Heart left ventricle (tissue), 16 donors: ENCODE measurements at regions of chr14 and their contacts with region 1.

Region 1: GRCh38 chr14:95561001-95561412 is 26.2 kb downstream of the GLRX5 start:
- DNase-seq: peak; percentile 73 to 85 (median 76)
- ATAC-seq: peak; percentile 71 to 90 (median 88)
- H3K4me3 ChIP-seq: no peak overlapping the region
- H3K27ac ChIP-seq: no peak overlapping the region
- H3K4me1 ChIP-seq: no peaks in the 10 kb centered on the region
- H3K27me3 ChIP-seq: peaks cover 0 to 4% (median 0%) of the 10 kb centered on the region in 9 donors
- CTCF ChIP-seq: peak; percentile 89 to 98 (median 94)
- POLR2A ChIP-seq: no peak

Region 2: DNA sequence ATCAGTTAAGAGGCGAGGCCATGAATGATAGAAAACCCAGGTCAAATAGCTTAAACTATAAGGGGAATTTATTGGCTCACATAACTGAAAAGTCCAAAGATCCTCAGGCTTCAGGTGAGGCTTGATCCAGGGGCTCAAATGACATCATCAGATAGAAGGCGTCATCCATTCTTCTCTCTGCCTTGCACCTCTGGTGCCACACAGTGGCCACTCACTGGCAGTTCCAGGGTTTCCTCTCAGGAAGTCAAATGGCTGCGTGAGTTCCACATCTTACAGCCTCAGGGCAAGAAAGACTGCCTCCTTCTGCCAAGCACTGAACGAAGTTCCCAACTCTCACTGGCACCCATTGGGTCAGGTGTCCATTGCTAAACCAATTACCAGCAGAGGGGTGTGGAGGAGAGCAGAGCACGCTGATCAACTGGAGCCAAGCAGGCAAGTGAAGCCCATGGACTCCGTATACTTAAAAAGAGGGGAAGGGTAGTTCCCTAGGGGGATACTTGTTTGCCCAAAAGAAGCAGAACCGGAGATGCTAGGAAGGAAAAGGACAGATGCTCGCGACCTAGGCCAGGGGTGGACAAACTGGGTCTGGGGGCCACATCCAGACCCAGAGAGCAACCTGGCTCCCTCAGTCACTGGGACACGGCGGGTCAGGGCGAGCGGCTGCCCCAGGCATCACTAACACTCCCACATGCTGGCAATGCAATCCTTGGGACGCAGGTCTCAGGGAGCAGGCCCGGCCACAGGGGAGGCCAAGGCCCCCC is 879.5 kb before region 1 on chr14:
- intact Hi-C with region 1: no loop called
- DNase-seq: no peak
- ATAC-seq: no peak
- H3K4me3 ChIP-seq: no peak overlapping the region
- H3K27ac ChIP-seq: no peak overlapping the region
- H3K4me1 ChIP-seq: no peaks in the 10 kb centered on the region
- H3K27me3 ChIP-seq: peaks cover 0 to 41% (median 2%) of the 10 kb centered on the region in 9 donors
- CTCF ChIP-seq: peak in 8 of 12 donors; percentile 10 to 34 (median 23)
- POLR2A ChIP-seq: no peak

Region 3: GRCh38 chr14:95408731-95409476 is 152.1 kb before region 1 on chr14:
- intact Hi-C with region 1: no loop called
- DNase-seq: peak in 3 of 5 donors; percentile 34 to 43 (median 38)
- ATAC-seq: peak; percentile 16 to 60 (median 31)
- H3K4me3 ChIP-seq: no peak overlapping the region
- H3K27ac ChIP-seq: peak overlapping the region in 11 of 12 donors; percentile 56 to 86 (median 78)
- H3K4me1 ChIP-seq: peaks cover 9 to 33% (median 18%) of the 10 kb centered on the region in 12 donors
- H3K27me3 ChIP-seq: no peaks in the 10 kb centered on the region
- CTCF ChIP-seq: no peak
- POLR2A ChIP-seq: no peak

Region 4: GRCh38 chr14:95683793-95684192 is 122.8 kb after region 1 on chr14:
- intact Hi-C with region 1: loop called in 1 of 10 experiments (anchors 10 kb)
- DNase-seq: no peak
- ATAC-seq: peak in 1 of 4 donors; percentile 24
- H3K4me3 ChIP-seq: no peak overlapping the region
- H3K27ac ChIP-seq: no peak overlapping the region
- H3K4me1 ChIP-seq: no peaks in the 10 kb centered on the region
- H3K27me3 ChIP-seq: peaks cover 0 to 42% (median 0%) of the 10 kb centered on the region in 9 donors
- CTCF ChIP-seq: peak in 8 of 12 donors; percentile 8 to 50 (median 22)
- POLR2A ChIP-seq: no peak

Region 5: GRCh38 chr14:95765051-95765450 is 204.0 kb after region 1 on chr14:
- intact Hi-C with region 1: loop called in 5 of 10 experiments (anchors 5 kb)
- DNase-seq: no peak
- ATAC-seq: no peak
- H3K4me3 ChIP-seq: no peak overlapping the region
- H3K27ac ChIP-seq: no peak overlapping the region
- H3K4me1 ChIP-seq: no peaks in the 10 kb centered on the region
- H3K27me3 ChIP-seq: peaks cover 0 to 22% (median 4%) of the 10 kb centered on the region in 9 donors
- CTCF ChIP-seq: no peak
- POLR2A ChIP-seq: no peak

Region 6: GRCh38 chr14:95774265-95775160 is 213.5 kb after region 1 on chr14:
- intact Hi-C with region 1: loop called in 9 of 10 experiments (anchors 1 to 5 kb)
- DNase-seq: peak in 1 of 5 donors; percentile 14
- ATAC-seq: no peak
- H3K4me3 ChIP-seq: no peak overlapping the region
- H3K27ac ChIP-seq: no peak overlapping the region
- H3K4me1 ChIP-seq: no peaks in the 10 kb centered on the region
- H3K27me3 ChIP-seq: peaks cover 0 to 10% (median 0%) of the 10 kb centered on the region in 9 donors
- CTCF ChIP-seq: peak; percentile 66 to 88 (median 80)
- POLR2A ChIP-seq: no peak

Region 7: DNA sequence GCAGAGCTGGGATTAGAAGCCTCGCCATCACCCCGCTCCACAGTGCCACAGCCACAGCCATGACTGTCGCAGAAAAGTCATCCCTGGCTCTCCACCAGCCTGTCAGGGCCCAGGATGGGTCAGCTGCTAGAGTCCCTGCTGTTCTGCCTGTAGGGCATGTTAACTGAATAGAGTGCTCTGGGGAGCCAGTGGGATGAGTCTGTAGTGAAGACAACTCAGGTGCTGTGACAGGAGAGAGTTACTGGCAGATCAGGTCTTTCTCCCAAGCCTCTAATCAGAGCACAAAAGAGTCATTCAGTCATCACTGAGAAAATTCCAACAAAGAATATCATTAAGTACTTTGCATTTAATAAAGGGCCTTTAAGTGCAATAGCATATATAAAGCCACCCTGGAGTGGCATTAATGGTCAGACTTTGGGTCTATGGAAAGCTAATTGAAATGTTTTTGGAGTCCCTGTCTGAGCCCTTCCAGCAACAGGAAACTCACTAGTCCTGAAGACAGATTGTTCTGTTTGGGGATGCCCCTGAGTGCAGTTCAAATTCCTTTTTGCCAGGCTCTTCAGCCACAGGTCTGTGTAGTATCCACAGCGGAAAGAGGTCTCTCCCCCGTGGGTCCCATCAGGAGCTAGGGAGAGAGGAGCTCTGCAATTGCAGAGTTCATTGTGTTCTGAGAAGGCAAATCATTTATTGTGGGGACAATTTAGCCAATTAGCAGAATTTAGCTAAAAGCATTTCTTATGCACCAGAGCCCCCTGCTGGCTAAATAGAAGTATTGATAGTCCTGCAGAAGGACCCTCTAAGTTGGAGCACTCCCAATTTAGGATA is 433.0 kb after region 1 on chr14:
- intact Hi-C with region 1: loop called (anchors 1 to 5 kb)
- DNase-seq: peak in 1 of 5 donors; percentile 8
- ATAC-seq: no peak
- H3K4me3 ChIP-seq: no peak overlapping the region
- H3K27ac ChIP-seq: no peak overlapping the region
- H3K4me1 ChIP-seq: no peaks in the 10 kb centered on the region
- H3K27me3 ChIP-seq: peaks cover 0 to 49% (median 10%) of the 10 kb centered on the region in 9 donors
- CTCF ChIP-seq: peak; percentile 65 to 84 (median 78)
- POLR2A ChIP-seq: no peak

Region 8: DNA sequence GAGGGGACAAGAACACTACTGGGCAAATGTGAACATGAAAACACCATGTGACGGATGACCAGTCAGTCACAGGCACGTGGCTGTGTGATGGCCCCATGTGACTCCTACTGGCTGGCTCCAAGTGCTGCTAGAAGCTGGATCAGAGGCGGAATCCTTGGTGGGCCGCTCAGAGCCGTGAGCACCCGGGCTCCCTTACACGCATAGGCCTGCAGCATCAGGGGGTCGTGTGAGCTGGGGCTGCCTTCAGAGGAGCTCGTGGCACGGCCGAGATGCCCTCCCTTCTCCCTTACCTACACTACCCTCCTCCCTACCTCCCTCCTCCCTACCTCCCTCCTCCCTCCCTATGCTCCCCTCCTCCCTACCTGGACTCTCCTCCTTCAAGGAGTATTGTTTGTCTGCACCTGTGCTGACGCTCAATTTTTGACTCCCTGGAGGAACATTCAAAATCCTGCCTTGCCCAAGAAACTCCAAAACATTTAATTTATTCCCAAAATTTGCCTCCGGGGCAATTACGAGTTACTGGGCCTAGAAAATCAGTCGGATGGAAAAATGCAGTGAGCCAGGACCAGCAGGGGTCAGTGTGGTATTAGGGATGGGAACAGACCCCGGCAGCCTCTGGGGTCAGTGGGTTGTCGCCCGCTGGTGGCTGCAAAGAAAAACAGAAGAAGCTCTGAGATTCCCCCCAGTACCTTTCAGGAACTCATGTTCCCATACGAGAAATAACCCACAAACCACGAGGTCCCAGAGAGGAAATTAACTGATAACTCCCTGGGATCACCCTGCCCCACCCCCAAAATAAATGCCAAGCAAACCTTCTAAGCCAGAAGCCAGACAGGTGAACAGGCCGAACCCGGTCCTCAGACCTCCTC is 539.4 kb after region 1 on chr14:
- intact Hi-C with region 1: loop called in 3 of 10 experiments (anchors 5 to 10 kb)
- DNase-seq: peak in 4 of 5 donors; percentile 59 to 72 (median 64)
- ATAC-seq: peak in 3 of 4 donors; percentile 52 to 66 (median 55)
- H3K4me3 ChIP-seq: no peak overlapping the region
- H3K27ac ChIP-seq: no peak overlapping the region
- H3K4me1 ChIP-seq: peaks cover 0 to 5% (median 0%) of the 10 kb centered on the region in 12 donors
- H3K27me3 ChIP-seq: peaks cover 0 to 29% (median 0%) of the 10 kb centered on the region in 9 donors
- CTCF ChIP-seq: peak; percentile 40 to 86 (median 76)
- POLR2A ChIP-seq: no peak

Region 9: GRCh38 chr14:96275177-96276112 is 714.4 kb after region 1 on chr14:
- intact Hi-C with region 1: loop called in 7 of 10 experiments (anchors 5 to 10 kb)
- DNase-seq: peak; percentile 51 to 78 (median 58)
- ATAC-seq: peak in 3 of 4 donors; percentile 58 to 69 (median 64)
- H3K4me3 ChIP-seq: no peak overlapping the region
- H3K27ac ChIP-seq: no peak overlapping the region
- H3K4me1 ChIP-seq: peaks cover 0 to 8% (median 0%) of the 10 kb centered on the region in 12 donors
- H3K27me3 ChIP-seq: no peaks in the 10 kb centered on the region
- CTCF ChIP-seq: peak; percentile 83 to 96 (median 90)
- POLR2A ChIP-seq: no peak